Activated CD8-positive, alpha-beta T cell treated with anti-CD3 and anti-CD28 coated beads for 36 hours (primary cell): ENCODE measurements at regions of chr10 and their contacts with region 1.

Region 1: GRCh38 chr10:124741281-124741921 is 2.8 kb downstream of the FAM53B start:
- DNase-seq: peak; percentile 92
- ATAC-seq: peak; percentile 63
- H3K4me3 Mint-ChIP-seq: peak overlapping the region; percentile 87
- H3K27ac Mint-ChIP-seq: peak overlapping the region; percentile 79
- H3K4me1 Mint-ChIP-seq: peaks cover 69% of the 10 kb centered on the region
- H3K27me3 Mint-ChIP-seq: peaks cover 1% of the 10 kb centered on the region
- CTCF ChIP-seq: peak; percentile 94

Region 2: GRCh38 chr10:124436191-124436638 is 305.2 kb before region 1 on chr10:
- CTCF ChIA-PET with region 1: no interaction called
- POLR2A ChIA-PET with region 1: no interaction called
- intact Hi-C with region 1: no loop called
- DNase-seq: no peak
- ATAC-seq: no peak
- H3K4me3 Mint-ChIP-seq: no peak overlapping the region
- H3K27ac Mint-ChIP-seq: no peak overlapping the region
- H3K4me1 Mint-ChIP-seq: peaks cover 3% of the 10 kb centered on the region
- H3K27me3 Mint-ChIP-seq: peaks cover 3% of the 10 kb centered on the region
- CTCF ChIP-seq: no peak

Region 3: DNA sequence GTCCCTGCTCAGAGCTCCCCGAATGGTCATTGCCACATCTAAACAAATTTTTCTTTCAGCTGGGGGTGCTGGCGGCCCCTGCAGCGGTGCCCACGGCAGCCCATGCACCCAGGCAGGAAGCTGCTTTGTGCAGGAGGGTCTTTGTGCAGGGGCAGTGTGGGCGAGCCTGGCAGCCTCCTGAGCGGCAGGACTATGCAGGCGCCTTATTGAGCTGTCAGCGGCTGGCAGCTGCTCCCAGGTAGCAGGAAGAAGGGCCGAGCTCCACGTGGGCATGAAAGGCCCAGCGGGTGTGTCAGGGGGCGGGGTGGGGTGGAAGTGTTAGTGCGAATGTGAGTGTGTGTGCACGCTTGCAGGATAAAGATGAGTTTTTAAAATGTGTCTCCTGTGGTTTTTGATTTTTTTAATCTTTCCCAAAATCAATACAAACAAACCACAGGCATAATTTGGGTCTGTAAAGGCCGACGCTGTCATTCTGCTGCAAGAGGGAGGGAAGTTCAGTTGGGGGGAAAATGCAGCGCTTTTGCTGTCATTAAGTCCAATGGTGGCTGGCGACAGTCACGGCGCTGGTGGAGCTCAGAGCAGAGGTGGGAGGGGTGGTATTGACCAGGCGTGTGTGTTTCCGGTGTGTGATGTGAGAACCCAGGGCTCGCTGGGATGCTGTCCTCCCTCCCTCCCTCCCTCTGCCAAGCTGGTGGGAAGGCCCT is 195.9 kb before region 1 on chr10:
- CTCF ChIA-PET with region 1: interaction called, 20 read pairs
- POLR2A ChIA-PET with region 1: interaction called, 3 read pairs
- intact Hi-C with region 1: no loop called
- DNase-seq: peak; percentile 35
- ATAC-seq: peak; percentile 43
- H3K4me3 Mint-ChIP-seq: no peak overlapping the region
- H3K27ac Mint-ChIP-seq: no peak overlapping the region
- H3K4me1 Mint-ChIP-seq: peaks cover 14% of the 10 kb centered on the region
- H3K27me3 Mint-ChIP-seq: no peaks in the 10 kb centered on the region
- CTCF ChIP-seq: no peak

Region 4: GRCh38 chr10:124632064-124632531 is 109.3 kb before region 1 on chr10:
- CTCF ChIA-PET with region 1: interaction called, 27 read pairs
- POLR2A ChIA-PET with region 1: interaction called, 10 read pairs
- intact Hi-C with region 1: no loop called
- DNase-seq: peak; percentile 58
- ATAC-seq: peak; percentile 57
- H3K4me3 Mint-ChIP-seq: no peak overlapping the region
- H3K27ac Mint-ChIP-seq: no peak overlapping the region
- H3K4me1 Mint-ChIP-seq: peaks cover 41% of the 10 kb centered on the region
- H3K27me3 Mint-ChIP-seq: no peaks in the 10 kb centered on the region
- CTCF ChIP-seq: peak; percentile 28

Region 5: GRCh38 chr10:124671486-124672075 is 69.8 kb before region 1 on chr10:
- CTCF ChIA-PET with region 1: interaction called, 32 read pairs
- POLR2A ChIA-PET with region 1: interaction called, 8 read pairs
- intact Hi-C with region 1: no loop called
- DNase-seq: peak; percentile 49
- ATAC-seq: peak; percentile 65
- H3K4me3 Mint-ChIP-seq: no peak overlapping the region
- H3K27ac Mint-ChIP-seq: peak overlapping the region; percentile 59
- H3K4me1 Mint-ChIP-seq: peaks cover 61% of the 10 kb centered on the region
- H3K27me3 Mint-ChIP-seq: no peaks in the 10 kb centered on the region
- CTCF ChIP-seq: peak; percentile 45

Region 6: GRCh38 chr10:124703778-124704427 is 37.5 kb before region 1 on chr10:
- CTCF ChIA-PET with region 1: interaction called, 31 read pairs
- POLR2A ChIA-PET with region 1: interaction called, 4 read pairs
- intact Hi-C with region 1: no loop called
- DNase-seq: no peak
- ATAC-seq: no peak
- H3K4me3 Mint-ChIP-seq: no peak overlapping the region
- H3K27ac Mint-ChIP-seq: peak overlapping the region; percentile 93
- H3K4me1 Mint-ChIP-seq: peaks cover 90% of the 10 kb centered on the region
- H3K27me3 Mint-ChIP-seq: no peaks in the 10 kb centered on the region
- CTCF ChIP-seq: no peak

Region 7: DNA sequence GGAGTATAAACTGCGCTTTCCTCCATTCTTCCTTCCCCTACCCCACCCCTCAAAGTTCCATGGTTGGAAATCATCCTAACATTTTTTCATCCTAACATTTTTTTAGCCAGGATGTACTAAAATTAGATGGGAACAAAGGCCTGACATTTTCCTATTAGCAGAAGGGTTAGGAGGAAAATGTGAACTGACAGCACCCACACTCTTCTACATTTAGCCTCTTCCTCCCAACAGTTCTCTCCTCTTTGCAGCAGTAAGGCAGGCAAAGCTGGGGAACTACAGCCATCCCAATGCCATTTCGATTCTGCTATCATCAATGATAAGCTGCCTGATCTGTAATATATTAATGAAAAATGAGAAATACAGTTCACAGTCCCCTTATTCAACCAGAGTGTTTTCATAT is 14.2 kb after region 1 on chr10:
- CTCF ChIA-PET with region 1: interaction called, 17 read pairs
- POLR2A ChIA-PET with region 1: no interaction called
- intact Hi-C with region 1: no loop called
- DNase-seq: no peak
- ATAC-seq: no peak
- H3K4me3 Mint-ChIP-seq: no peak overlapping the region
- H3K27ac Mint-ChIP-seq: no peak overlapping the region
- H3K4me1 Mint-ChIP-seq: no peaks in the 10 kb centered on the region
- H3K27me3 Mint-ChIP-seq: no peaks in the 10 kb centered on the region
- CTCF ChIP-seq: no peak

Region 8: DNA sequence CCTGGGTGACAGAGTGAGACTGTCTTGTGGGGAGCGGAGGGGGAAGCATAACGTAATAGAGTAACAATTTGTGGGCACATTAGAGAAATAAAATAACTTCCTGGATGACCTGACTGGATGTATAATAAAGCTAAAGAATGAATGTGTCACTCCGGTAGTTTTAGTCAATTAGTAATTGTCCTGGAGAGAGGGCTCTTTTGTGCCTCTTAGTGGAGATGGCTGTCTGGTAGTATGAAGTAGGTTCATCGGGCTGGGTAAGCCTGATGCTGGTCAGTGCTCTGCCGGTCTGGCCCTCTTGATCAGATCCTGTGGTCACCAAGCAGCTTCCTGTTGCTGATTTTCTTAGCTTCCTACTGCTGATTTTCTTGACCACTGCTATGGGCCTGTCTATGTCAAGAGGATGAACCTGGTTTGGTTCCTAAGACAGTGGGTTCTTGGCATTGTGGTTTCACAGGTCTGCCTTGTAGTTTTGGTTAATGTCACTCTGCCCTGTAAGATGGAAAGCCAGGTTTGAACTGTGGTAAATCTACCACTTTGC is 234.6 kb after region 1 on chr10:
- CTCF ChIA-PET with region 1: no interaction called
- POLR2A ChIA-PET with region 1: no interaction called
- intact Hi-C with region 1: no loop called
- DNase-seq: peak; percentile 21
- ATAC-seq: peak; percentile 80
- H3K4me3 Mint-ChIP-seq: no peak overlapping the region
- H3K27ac Mint-ChIP-seq: peak overlapping the region; percentile 26
- H3K4me1 Mint-ChIP-seq: peaks cover 29% of the 10 kb centered on the region
- H3K27me3 Mint-ChIP-seq: no peaks in the 10 kb centered on the region
- CTCF ChIP-seq: no peak